ENCODE measurements at regions of chr18 and their contacts with region 1.

Region 1: GRCh38 chr18:55781481-55781957 is 193.5 kb upstream of the TCF4 start:
- DNase-seq: peak in 4 of 5 donors; percentile 31 to 58 (median 46)
- H3K4me3 ChIP-seq: no peak overlapping the region
- H3K27ac ChIP-seq: no peak overlapping the region
- H3K4me1 ChIP-seq: no peaks in the 10 kb centered on the region
- H3K27me3 ChIP-seq: no peaks in the 10 kb centered on the region
- CTCF ChIP-seq: peak in 2 of 3 donors; percentile 21 to 44
- EP300 ChIP-seq: no peak
- POLR2A ChIP-seq: no peak

Region 2: DNA sequence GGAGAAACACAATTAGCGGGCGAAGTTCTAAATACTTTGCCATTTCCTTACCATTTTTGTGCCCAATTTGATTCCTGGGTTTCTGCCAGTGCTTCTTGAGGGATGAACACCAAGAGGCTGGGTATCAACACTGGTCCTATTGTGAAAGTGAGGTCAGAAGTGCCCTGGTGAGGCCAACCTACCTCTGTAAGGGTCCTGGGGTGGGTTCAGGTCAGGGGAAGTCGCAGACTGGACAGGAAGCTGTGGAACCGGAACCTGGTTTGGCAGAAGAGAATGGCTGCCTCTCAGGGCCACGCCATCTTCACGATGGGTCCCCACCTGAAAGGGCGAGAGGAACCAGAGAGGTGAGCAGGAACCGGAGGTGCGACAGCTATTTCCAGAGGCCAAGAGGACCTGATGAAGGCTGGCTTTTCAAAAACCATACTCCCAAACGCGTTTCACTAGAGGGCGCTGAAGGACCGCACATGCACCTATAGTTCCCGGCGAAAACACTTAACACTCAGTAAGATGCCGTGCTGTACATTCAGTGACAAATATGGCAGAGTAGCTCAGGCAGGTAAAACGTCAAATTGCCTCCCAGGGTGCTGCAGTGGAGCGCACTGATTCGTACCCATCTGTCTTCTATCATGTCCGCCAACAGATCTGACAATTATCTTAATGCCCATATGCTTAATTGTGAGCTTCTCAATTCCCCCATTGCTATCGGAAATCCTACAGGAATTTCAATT is 547.0 kb before region 1 on chr18:
- intact Hi-C with region 1: loop called in 1 of 4 experiments (anchors 5 kb)
- DNase-seq: peak; percentile 67 to 86 (median 80)
- H3K4me3 ChIP-seq: no peak overlapping the region
- H3K27ac ChIP-seq: no peak overlapping the region
- H3K4me1 ChIP-seq: peaks cover 2% of the 10 kb centered on the region
- H3K27me3 ChIP-seq: no peaks in the 10 kb centered on the region
- CTCF ChIP-seq: peak; percentile 41 to 80 (median 68)
- EP300 ChIP-seq: no peak
- POLR2A ChIP-seq: no peak

Region 3: DNA sequence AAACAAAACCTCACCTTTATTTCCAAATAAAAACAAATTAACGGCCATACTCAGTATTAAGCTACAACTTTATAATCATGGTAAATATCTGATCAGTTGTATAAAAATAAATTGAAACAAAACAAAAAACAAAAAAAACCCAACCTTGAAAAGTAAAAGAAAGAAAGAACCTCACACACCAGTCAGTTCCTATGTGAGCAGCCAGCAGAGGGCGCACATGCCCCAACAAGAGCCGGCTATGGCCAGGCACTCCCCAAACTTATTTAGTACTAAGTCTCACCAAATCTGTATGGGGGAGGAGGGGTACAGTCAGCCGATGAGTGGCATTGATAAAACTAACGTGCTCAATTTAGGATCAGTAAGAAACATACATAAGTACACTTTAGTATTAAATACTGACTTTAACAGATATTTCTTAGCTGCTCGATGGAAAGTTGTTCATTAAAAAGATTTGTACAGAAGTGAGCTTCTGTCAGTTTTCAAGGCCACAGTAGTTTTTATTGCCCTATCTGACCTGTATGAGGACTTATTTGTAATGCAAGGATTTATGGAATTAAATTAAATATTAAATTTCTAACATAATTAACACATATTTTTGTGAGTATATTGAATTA is 366.2 kb before region 1 on chr18:
- intact Hi-C with region 1: loop called in 1 of 4 experiments (anchors 10 kb)
- DNase-seq: peak; percentile 83 to 93 (median 92)
- H3K4me3 ChIP-seq: no peak overlapping the region
- H3K27ac ChIP-seq: no peak overlapping the region
- H3K4me1 ChIP-seq: peaks cover 2% of the 10 kb centered on the region
- H3K27me3 ChIP-seq: no peaks in the 10 kb centered on the region
- CTCF ChIP-seq: peak; percentile 57 to 89 (median 78)
- EP300 ChIP-seq: no peak
- POLR2A ChIP-seq: no peak

Region 4: GRCh38 chr18:55856229-55856628 is 74.7 kb after region 1 on chr18:
- intact Hi-C with region 1: no loop called
- DNase-seq: no peak
- H3K4me3 ChIP-seq: no peak overlapping the region
- H3K27ac ChIP-seq: no peak overlapping the region
- H3K4me1 ChIP-seq: no peaks in the 10 kb centered on the region
- H3K27me3 ChIP-seq: no peaks in the 10 kb centered on the region
- CTCF ChIP-seq: no peak
- EP300 ChIP-seq: no peak
- POLR2A ChIP-seq: no peak

Region 5: GRCh38 chr18:55998071-55998522 is 216.6 kb after region 1 on chr18:
- intact Hi-C with region 1: loop called in 1 of 4 experiments (anchors 10 kb)
- DNase-seq: peak in 2 of 5 donors; percentile 34 to 40
- H3K4me3 ChIP-seq: peak overlapping the region; percentile 10
- H3K27ac ChIP-seq: no peak overlapping the region
- H3K4me1 ChIP-seq: peaks cover 5% of the 10 kb centered on the region
- H3K27me3 ChIP-seq: no peaks in the 10 kb centered on the region
- CTCF ChIP-seq: no peak
- EP300 ChIP-seq: no peak
- POLR2A ChIP-seq: no peak

Region 6: GRCh38 chr18:56052202-56052601 is 270.7 kb after region 1 on chr18:
- intact Hi-C with region 1: no loop called
- DNase-seq: no peak
- H3K4me3 ChIP-seq: no peak overlapping the region
- H3K27ac ChIP-seq: no peak overlapping the region
- H3K4me1 ChIP-seq: no peaks in the 10 kb centered on the region
- H3K27me3 ChIP-seq: no peaks in the 10 kb centered on the region
- CTCF ChIP-seq: no peak
- EP300 ChIP-seq: no peak
- POLR2A ChIP-seq: no peak

Region 7: DNA sequence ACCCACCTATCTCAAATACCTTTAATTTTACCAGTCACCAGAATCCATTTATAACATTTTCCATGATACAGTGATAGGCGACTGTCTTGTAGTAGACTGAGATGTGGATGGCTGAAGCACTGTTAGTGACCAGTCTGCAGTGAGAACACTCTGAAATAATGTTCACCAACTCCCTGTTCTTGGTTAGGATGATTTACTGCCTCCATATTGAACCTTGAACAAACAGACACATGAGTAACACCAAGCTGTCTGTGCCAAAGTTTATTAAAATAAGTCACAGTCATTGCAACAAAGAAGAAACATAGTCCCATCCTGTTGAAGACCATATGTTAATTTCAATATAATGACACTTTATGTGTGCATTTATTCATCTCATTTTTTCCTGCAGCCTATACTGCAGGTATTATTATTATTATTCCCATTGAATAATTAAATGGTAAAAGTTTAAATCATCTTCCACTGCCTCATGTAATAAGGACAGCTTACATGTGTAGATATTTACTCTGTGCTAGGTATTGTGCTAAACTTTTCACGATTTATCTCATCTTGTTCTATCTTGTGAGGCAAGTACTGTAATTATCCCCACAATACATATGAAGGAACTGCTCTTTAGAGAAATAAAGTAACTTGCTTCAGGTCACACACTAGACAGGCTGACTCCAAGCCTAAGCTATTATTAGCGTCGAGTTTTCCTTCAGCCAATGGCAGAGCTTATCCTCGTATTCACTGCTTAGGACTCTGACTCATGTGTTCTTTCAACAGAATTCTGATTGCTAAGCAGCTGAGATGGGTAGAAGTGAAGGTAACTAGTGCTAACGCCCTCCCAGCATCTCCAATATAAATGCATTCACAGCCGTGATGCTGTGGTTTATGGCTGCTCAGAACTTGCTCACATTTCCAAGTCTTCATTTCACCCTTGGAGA is 1716.1 kb after region 1 on chr18:
- intact Hi-C with region 1: no loop called
- DNase-seq: no peak
- H3K4me3 ChIP-seq: no peak overlapping the region
- H3K27ac ChIP-seq: no peak overlapping the region
- H3K4me1 ChIP-seq: no peaks in the 10 kb centered on the region
- H3K27me3 ChIP-seq: no peaks in the 10 kb centered on the region
- CTCF ChIP-seq: no peak
- EP300 ChIP-seq: no peak
- POLR2A ChIP-seq: no peak